ENCODE measurements at regions of chr5 and their contacts with region 1.

Region 1: GRCh38 chr5:58460732-58461286 is 923 bp upstream of the PLK2 start:
- DNase-seq: peak; percentile 94
- H3K4me3 Mint-ChIP-seq: peak overlapping the region; percentile 74
- H3K27ac Mint-ChIP-seq: no peak overlapping the region
- H3K4me1 Mint-ChIP-seq: peaks cover 15% of the 10 kb centered on the region
- H3K27me3 Mint-ChIP-seq: peaks cover 14% of the 10 kb centered on the region

Region 2: GRCh38 chr5:57173185-57174127 is 1287.4 kb before region 1 on chr5 and contains the start of gene GPBP1:
- CTCF ChIA-PET with region 1: no interaction called
- POLR2A ChIA-PET with region 1: interaction called, 3 read pairs
- intact Hi-C with region 1: loop called (anchors 1 kb)
- DNase-seq: peak; percentile 98
- H3K4me3 Mint-ChIP-seq: peak within 1 kb of the TSS; percentile 86
- H3K27ac Mint-ChIP-seq: peak within 1 kb of the TSS; percentile 98
- H3K4me1 Mint-ChIP-seq: peaks cover 20% of the 10 kb centered on the region
- H3K27me3 Mint-ChIP-seq: no peaks in the 10 kb centered on the region
- total RNA-seq, gene GPBP1: 94.1 to 98.5 TPM

Region 3: GRCh38 chr5:57338068-57338892 is 1122.5 kb before region 1 on chr5:
- CTCF ChIA-PET with region 1: interaction called, 13 read pairs
- POLR2A ChIA-PET with region 1: no interaction called
- intact Hi-C with region 1: no loop called
- DNase-seq: peak; percentile 22
- H3K4me3 Mint-ChIP-seq: no peak overlapping the region
- H3K27ac Mint-ChIP-seq: no peak overlapping the region
- H3K4me1 Mint-ChIP-seq: no peaks in the 10 kb centered on the region
- H3K27me3 Mint-ChIP-seq: peaks cover 2% of the 10 kb centered on the region

Region 4: DNA sequence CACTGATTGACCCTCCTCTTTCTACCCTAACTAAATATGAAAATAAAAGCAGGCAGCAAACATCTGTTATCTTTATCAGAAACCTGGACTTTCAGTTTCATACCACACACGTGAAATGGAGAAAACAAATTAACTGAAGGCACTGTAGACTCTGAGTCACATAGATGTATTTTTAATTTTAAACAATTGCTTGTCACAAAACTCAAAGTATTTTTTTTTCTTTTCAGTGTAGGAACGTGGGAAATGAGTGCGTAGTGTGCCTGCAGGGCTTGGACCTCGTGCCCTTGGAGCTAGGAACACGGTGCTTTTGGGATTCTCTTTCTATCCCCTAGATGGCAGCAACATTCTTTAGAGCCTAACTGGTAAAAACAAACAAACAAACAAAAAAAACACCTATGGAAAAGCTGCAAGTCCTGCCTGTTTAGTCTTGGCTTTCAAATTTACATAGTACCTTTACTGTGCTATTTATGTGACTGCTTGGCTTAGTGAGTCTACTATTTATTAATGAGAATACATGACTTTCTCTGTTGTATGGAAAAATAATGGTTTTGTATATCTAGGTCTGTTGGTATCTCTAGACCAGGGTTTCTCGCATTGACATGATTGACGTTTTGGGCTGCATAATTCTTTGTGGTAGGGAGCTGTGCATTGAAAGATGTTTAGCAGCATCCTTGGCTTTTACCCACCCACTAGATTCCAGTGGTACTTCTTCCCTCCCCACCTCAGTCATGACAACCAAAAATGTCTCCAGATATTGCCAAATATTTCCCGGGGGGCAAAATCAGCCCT is 961.4 kb before region 1 on chr5:
- CTCF ChIA-PET with region 1: interaction called, 4 read pairs
- POLR2A ChIA-PET with region 1: no interaction called
- intact Hi-C with region 1: loop called (anchors 1 kb)
- DNase-seq: peak; percentile 24
- H3K4me3 Mint-ChIP-seq: no peak overlapping the region
- H3K27ac Mint-ChIP-seq: no peak overlapping the region
- H3K4me1 Mint-ChIP-seq: peaks cover 28% of the 10 kb centered on the region
- H3K27me3 Mint-ChIP-seq: peaks cover 4% of the 10 kb centered on the region

Region 5: DNA sequence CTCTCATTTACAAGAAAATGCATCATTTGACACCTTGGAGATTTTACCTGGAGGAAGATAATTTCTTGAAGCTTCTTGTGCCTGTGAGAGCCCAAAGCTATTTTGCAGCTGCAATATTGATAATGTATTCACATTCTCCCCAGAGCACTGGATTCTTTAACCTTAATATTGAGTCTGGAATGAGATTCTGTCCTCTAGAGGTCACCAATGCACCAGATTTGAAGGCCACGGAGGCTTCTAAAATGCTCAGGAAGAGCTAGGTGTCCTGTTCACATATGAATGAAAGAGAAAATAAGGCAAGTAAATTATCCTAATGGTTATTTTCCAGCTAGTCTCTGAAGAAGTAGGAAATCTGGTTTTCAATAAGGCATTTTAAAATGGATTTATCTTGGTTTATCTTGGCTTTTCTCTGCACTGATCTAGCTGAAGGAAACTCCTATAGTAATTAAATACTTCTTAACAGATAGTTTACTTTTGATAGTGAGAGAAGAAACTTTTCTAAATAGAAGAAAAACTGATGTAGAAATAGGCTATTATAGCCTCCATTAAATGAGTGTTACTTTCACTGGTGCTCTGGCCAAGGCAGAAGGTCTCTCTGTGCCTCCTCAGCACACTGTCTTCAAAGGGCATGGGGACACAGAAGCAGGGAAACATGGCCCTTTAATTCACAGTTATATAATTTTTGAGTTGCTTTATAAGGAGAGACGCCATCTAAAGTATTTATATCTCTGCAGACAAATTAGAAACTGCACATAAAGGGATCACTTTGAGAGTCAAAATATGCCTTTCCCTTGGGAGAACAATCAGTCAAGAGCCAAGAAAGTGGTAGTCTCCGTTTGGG is 681.2 kb before region 1 on chr5:
- CTCF ChIA-PET with region 1: interaction called, 47 read pairs
- POLR2A ChIA-PET with region 1: no interaction called
- intact Hi-C with region 1: loop called (anchors 1 kb)
- DNase-seq: peak; percentile 21
- H3K4me3 Mint-ChIP-seq: no peak overlapping the region
- H3K27ac Mint-ChIP-seq: no peak overlapping the region
- H3K4me1 Mint-ChIP-seq: no peaks in the 10 kb centered on the region
- H3K27me3 Mint-ChIP-seq: peaks cover 6% of the 10 kb centered on the region

Region 6: DNA sequence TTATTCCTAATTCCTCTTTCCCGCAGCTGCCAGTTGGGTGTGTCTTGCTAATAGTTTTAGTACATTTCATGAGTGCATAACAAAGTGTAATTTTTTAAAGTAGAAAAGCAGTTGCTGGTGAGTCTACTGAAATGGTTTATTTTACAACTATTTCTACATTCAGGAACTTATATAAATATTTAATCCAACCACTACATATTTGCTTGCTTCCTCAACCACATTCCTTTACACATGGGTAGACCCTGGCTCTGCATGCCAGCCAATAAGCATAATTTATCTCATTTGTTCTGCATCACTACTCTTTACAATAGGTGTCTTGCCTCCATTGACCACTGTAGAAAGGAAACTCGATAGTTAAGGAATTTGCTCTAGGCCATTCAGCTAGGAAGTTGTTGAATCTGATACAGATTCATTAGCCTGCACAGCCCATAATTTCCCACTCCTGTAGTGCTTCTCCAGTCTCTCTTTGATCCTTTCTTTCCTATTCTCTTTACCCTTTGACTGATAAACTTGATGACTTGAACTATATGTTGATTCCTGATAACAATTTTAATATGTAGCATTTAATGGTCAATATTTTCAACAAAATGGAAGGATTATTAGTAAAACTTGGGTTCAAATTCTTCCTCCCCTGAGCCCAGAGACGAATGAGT is 635.7 kb before region 1 on chr5:
- CTCF ChIA-PET with region 1: no interaction called
- POLR2A ChIA-PET with region 1: no interaction called
- intact Hi-C with region 1: no loop called
- DNase-seq: no peak
- H3K4me3 Mint-ChIP-seq: no peak overlapping the region
- H3K27ac Mint-ChIP-seq: no peak overlapping the region
- H3K4me1 Mint-ChIP-seq: no peaks in the 10 kb centered on the region
- H3K27me3 Mint-ChIP-seq: peaks cover 2% of the 10 kb centered on the region